CD14-positive monocyte (primary cell): ENCODE measurements at regions of chr17 and their contacts with region 1.

Region 1: GRCh38 chr17:49788478-49789242 is at the start of gene KAT7:
- DNase-seq: peak; percentile 99 to 100 (median 99)
- H3K4me3 ChIP-seq: peak within 1 kb of the TSS; percentile 68 to 97 (median 96)
- H3K4me3 Mint-ChIP-seq: peak within 1 kb of the TSS; percentile 92 to 96
- H3K27ac ChIP-seq: peak within 1 kb of the TSS; percentile 87 to 99
- H3K27ac Mint-ChIP-seq: peak within 1 kb of the TSS; percentile 96 to 99 (median 99)
- H3K4me1 ChIP-seq: peaks cover 21 to 27% of the 10 kb centered on the region in 2 donors
- H3K4me1 Mint-ChIP-seq: peaks cover 29% of the 10 kb centered on the region
- H3K27me3 ChIP-seq: no peaks in the 10 kb centered on the region
- H3K27me3 Mint-ChIP-seq: peaks cover 0 to 1% (median 0%) of the 10 kb centered on the region in 3 donors
- CTCF ChIP-seq: no peak
- polyA plus RNA-seq, gene KAT7: 17.5 to 28.1 (median 18.1) TPM

Region 2: GRCh38 chr17:49365667-49366066 is 423.0 kb before region 1 on chr17:
- intact Hi-C with region 1: no loop called
- DNase-seq: no peak
- H3K4me3 ChIP-seq: no peak overlapping the region
- H3K4me3 Mint-ChIP-seq: no peak overlapping the region
- H3K27ac ChIP-seq: no peak overlapping the region
- H3K27ac Mint-ChIP-seq: peak overlapping the region in 2 of 7 donors; percentile 37 to 54
- H3K4me1 ChIP-seq: peaks cover 25 to 33% of the 10 kb centered on the region in 2 donors
- H3K4me1 Mint-ChIP-seq: peaks cover 28% of the 10 kb centered on the region
- H3K27me3 ChIP-seq: no peaks in the 10 kb centered on the region
- H3K27me3 Mint-ChIP-seq: peaks cover 0 to 2% (median 0%) of the 10 kb centered on the region in 3 donors
- CTCF ChIP-seq: no peak

Region 3: GRCh38 chr17:49414622-49415350 is 373.9 kb before region 1 on chr17 and contains the start of gene PHB1:
- intact Hi-C with region 1: loop called in 1 of 2 experiments (anchors 5 kb)
- DNase-seq: peak; percentile 94 to 98 (median 94)
- H3K4me3 ChIP-seq: peak within 1 kb of the TSS; percentile 58 to 98 (median 81)
- H3K4me3 Mint-ChIP-seq: peak within 1 kb of the TSS; percentile 98 to 100
- H3K27ac ChIP-seq: peak within 1 kb of the TSS in 1 of 2 donors; percentile 63
- H3K27ac Mint-ChIP-seq: peak within 1 kb of the TSS; percentile 80 to 96 (median 90)
- H3K4me1 ChIP-seq: peaks cover 15 to 18% of the 10 kb centered on the region in 2 donors
- H3K4me1 Mint-ChIP-seq: peaks cover 19% of the 10 kb centered on the region
- H3K27me3 ChIP-seq: no peaks in the 10 kb centered on the region
- H3K27me3 Mint-ChIP-seq: peaks cover 4 to 7% (median 6%) of the 10 kb centered on the region in 3 donors
- CTCF ChIP-seq: no peak
- polyA plus RNA-seq, gene PHB1: 57.1 to 89.2 (median 83.9) TPM

Region 4: GRCh38 chr17:49567871-49568694 is 220.6 kb before region 1 on chr17:
- intact Hi-C with region 1: loop called in 1 of 2 experiments (anchors 5 kb)
- DNase-seq: peak; percentile 80 to 83 (median 82)
- H3K4me3 ChIP-seq: peak overlapping the region; percentile 5 to 76 (median 39)
- H3K4me3 Mint-ChIP-seq: peak overlapping the region; percentile 79 to 87
- H3K27ac ChIP-seq: no peak overlapping the region
- H3K27ac Mint-ChIP-seq: peak overlapping the region in 2 of 7 donors; percentile 37 to 60
- H3K4me1 ChIP-seq: peaks cover 14 to 18% of the 10 kb centered on the region in 2 donors
- H3K4me1 Mint-ChIP-seq: peaks cover 17% of the 10 kb centered on the region
- H3K27me3 ChIP-seq: peaks cover 3 to 34% of the 10 kb centered on the region in 2 donors
- H3K27me3 Mint-ChIP-seq: peaks cover 39 to 53% (median 48%) of the 10 kb centered on the region in 3 donors
- CTCF ChIP-seq: peak; percentile 97

Region 5: DNA sequence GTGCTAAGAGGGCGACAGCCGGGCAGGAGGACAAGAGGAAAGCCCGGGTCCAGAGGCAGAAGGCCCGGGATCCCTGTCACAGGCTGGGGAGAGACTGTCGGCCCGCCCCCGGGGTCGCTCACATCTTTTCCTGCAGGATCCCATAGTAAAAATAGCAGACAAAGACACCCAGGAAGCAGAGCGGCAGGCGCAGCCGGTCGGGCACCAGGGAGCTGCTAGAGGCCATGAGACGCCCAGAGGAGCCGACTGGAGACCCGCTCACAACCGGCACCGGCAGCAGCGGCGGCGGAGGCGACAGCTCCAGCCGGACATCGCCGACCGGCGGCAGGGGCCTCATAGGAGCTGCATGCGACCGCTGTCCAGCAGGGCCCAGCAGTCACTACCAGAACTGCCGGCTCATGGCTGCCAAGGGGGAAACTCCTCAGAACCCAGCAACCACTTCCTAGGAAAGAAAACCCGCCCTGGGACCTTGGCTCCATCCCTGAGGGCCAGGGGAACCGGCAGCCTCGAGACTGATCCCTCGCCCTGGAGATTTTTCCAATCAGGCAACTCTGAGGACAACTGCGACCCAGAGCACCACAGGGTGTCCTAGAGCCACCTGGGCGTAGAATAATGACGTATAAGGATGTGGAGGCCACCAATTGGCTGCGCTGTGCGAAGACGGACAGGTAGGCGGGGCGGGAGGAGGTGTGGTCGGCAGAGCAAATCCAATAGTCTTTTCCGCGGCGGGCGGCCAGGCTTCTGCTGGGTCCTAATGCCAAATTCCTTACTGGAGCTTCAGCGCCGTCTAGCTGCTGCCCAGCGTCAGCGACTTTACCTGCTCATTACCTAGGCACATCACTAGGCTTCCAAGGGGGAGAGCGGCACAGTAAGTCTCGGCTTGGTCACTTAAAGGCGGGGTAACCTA is 80.8 kb before region 1 on chr17 and contains the start of gene SLC35B1:
- intact Hi-C with region 1: loop called (anchors 2 kb)
- DNase-seq: peak; percentile 97 to 98 (median 98)
- H3K4me3 ChIP-seq: peak within 1 kb of the TSS; percentile 78 to 96 (median 94)
- H3K4me3 Mint-ChIP-seq: peak within 1 kb of the TSS; percentile 90 to 93
- H3K27ac ChIP-seq: peak within 1 kb of the TSS; percentile 65 to 99
- H3K27ac Mint-ChIP-seq: peak within 1 kb of the TSS; percentile 96 to 99 (median 99)
- H3K4me1 ChIP-seq: peaks cover 23 to 30% of the 10 kb centered on the region in 2 donors
- H3K4me1 Mint-ChIP-seq: peaks cover 29% of the 10 kb centered on the region
- H3K27me3 ChIP-seq: no peaks in the 10 kb centered on the region
- H3K27me3 Mint-ChIP-seq: no peaks in the 10 kb centered on the region
- CTCF ChIP-seq: peak; percentile 70
- polyA plus RNA-seq, gene SLC35B1: 56.0 to 61.0 (median 58.8) TPM